ENCODE measurements at regions of chr2 and their contacts with region 1.

Region 1: GRCh38 chr2:25700221-25700660 is 26.9 kb upstream of the DTNB start:
- DNase-seq: no peak
- ATAC-seq: peak; percentile 86
- H3K4me3 ChIP-seq: no peak overlapping the region
- H3K27ac ChIP-seq: no peak overlapping the region
- H3K4me1 ChIP-seq: no peaks in the 10 kb centered on the region
- H3K27me3 ChIP-seq: peaks cover 4 to 5% of the 10 kb centered on the region in 2 experiments; a peak in 2 of 4 replicates
- CTCF ChIP-seq: peak; percentile 69 to 80 (median 70)
- EP300 ChIP-seq: no peak
- POLR2A ChIP-seq: no peak
- RAD21 ChIP-seq: peak; percentile 65

Region 2: GRCh38 chr2:25349397-25349796 is 350.8 kb before region 1 on chr2:
- CTCF ChIA-PET with region 1: no interaction called
- POLR2A ChIA-PET with region 1: no interaction called
- RAD21 ChIA-PET with region 1: no interaction called
- SMC1A ChIA-PET with region 1: no interaction called
- in situ Hi-C with region 1: no loop called
- intact Hi-C with region 1: no loop called
- DNase-seq: no peak
- ATAC-seq: no peak
- H3K4me3 ChIP-seq: no peak overlapping the region
- H3K27ac ChIP-seq: no peak overlapping the region
- H3K4me1 ChIP-seq: peaks cover 15% of the 10 kb centered on the region
- H3K27me3 ChIP-seq: peaks cover 0 to 1% of the 10 kb centered on the region in 2 experiments; a peak in 2 of 4 replicates
- CTCF ChIP-seq: no peak
- EP300 ChIP-seq: no peak
- POLR2A ChIP-seq: no peak
- RAD21 ChIP-seq: no peak

Region 3: DNA sequence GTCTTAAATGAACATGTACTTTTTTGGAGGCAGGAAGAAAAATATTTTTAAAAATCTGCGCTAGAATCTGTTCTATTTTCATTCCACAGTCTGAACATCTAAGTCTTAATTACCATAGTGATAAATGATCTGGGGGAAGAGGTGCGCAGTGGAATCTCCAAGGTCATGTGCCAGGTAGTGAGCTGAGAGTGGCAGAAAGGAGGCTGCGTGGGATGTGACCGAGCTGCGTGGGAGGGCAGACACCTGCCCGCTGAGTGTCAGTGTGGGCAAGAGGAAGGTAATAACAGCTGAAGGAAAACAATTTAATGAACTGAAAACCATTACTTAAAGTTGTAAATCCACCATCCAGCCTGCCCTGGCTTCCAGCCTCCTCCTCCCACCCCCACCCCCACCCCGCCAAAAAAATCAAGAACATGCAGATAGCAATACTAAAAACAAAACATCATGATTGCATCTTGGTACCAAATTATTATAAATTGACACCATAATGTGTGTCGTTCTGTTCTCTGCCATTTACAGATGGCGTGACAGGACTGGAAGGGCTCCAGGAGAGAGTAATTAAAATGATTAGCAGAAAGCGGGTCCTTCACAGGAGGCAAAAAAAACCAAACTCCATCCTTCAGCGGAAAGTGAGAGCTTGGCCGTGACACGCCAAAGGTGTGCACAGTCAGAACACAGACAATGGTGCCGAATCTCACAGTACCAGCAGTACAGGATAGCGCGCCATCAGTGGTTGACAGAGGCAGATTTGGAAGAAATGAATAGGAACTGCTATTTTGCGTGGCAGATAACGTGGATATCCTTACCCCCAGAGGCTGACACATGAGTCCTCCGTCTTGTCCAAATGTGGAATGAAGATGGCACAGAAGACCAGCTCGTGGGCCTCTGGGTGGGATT is 15.4 kb before region 1 on chr2:
- CTCF ChIA-PET with region 1: interaction called, 21 read pairs
- POLR2A ChIA-PET with region 1: interaction called, 3 read pairs
- RAD21 ChIA-PET with region 1: no interaction called
- SMC1A ChIA-PET with region 1: interaction called, 5 read pairs
- in situ Hi-C with region 1: no loop called
- intact Hi-C with region 1: no loop called
- DNase-seq: no peak
- ATAC-seq: no peak
- H3K4me3 ChIP-seq: no peak overlapping the region
- H3K27ac ChIP-seq: no peak overlapping the region
- H3K4me1 ChIP-seq: no peaks in the 10 kb centered on the region
- H3K27me3 ChIP-seq: no peaks in the 10 kb centered on the region
- CTCF ChIP-seq: no peak
- EP300 ChIP-seq: no peak
- POLR2A ChIP-seq: no peak
- RAD21 ChIP-seq: no peak

Region 4: DNA sequence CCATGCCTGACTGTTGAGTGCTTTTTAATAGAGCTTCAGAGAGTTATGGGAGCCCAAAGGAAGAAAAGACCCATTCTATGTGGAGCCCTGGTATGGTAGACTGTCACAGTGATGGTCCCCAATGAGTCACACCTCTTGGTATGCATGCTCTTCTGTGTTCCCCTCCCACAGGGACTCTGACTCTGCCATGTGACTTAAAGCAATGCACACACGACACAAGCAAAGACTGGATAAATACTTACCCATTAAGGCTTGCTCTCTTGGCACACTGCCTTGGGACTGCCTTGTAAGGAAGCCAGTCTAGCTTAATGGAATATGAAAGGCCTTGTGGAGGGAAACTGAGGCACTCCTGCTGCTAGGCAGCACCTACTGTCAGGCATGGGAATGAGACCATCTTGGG is 10.2 kb before region 1 on chr2:
- CTCF ChIA-PET with region 1: interaction called, 21 read pairs
- POLR2A ChIA-PET with region 1: interaction called, 3 read pairs
- RAD21 ChIA-PET with region 1: interaction called, 4 read pairs
- SMC1A ChIA-PET with region 1: interaction called, 6 read pairs
- in situ Hi-C with region 1: no loop called
- intact Hi-C with region 1: no loop called
- DNase-seq: no peak
- ATAC-seq: no peak
- H3K4me3 ChIP-seq: no peak overlapping the region
- H3K27ac ChIP-seq: no peak overlapping the region
- H3K4me1 ChIP-seq: no peaks in the 10 kb centered on the region
- H3K27me3 ChIP-seq: no peaks in the 10 kb centered on the region
- CTCF ChIP-seq: no peak
- EP300 ChIP-seq: no peak
- POLR2A ChIP-seq: no peak
- RAD21 ChIP-seq: no peak

Region 5: GRCh38 chr2:25714740-25715139 is 14.5 kb after region 1 on chr2:
- CTCF ChIA-PET with region 1: interaction called, 31 read pairs
- POLR2A ChIA-PET with region 1: no interaction called
- RAD21 ChIA-PET with region 1: interaction called, 5 read pairs
- SMC1A ChIA-PET with region 1: interaction called, 9 read pairs
- in situ Hi-C with region 1: no loop called
- intact Hi-C with region 1: no loop called
- DNase-seq: no peak
- ATAC-seq: 0 out of 3 replicates have a peak, but pooled peaks have one; percentile 27
- H3K4me3 ChIP-seq: no peak overlapping the region
- H3K27ac ChIP-seq: no peak overlapping the region
- H3K4me1 ChIP-seq: no peaks in the 10 kb centered on the region
- H3K27me3 ChIP-seq: no peaks in the 10 kb centered on the region
- CTCF ChIP-seq: peak; percentile 10 to 16 (median 11); a peak in 4 of 6 replicates
- EP300 ChIP-seq: no peak
- POLR2A ChIP-seq: no peak
- RAD21 ChIP-seq: peak; percentile 39; the same call in 1 of the 2 replicates

Region 6: DNA sequence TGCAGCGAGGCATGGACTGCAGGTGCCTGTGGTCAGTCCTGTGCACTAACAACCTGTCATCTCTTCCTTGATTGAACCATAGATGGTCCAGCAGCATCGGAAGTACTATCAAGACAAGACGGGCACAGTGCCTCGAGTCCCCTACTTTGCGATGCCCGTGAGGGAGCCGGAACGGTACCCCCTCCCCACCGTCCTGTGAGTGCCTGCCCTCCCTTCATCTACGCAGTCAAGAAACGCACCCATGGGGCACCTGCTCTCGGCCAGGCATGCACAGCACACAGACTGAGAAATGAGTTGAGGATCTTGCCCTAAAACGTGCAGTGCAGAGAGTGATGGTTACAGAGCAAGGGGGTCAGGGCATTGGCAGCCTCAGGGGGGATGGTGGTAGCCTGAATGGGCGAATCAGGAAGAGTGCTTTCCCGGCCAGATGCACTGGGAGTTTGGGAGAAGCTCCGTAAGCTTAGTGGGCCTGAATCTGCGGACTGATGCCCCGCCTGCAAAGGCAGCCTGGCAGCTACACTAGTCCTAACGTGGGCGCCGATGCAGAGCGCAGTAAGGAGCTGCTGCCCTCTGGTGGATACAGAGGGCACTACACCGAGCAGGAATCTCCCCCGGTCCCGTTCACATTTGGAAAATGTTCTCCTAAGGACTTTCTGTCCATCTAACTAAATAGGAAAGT is 877.3 kb after region 1 on chr2:
- CTCF ChIA-PET with region 1: no interaction called
- POLR2A ChIA-PET with region 1: no interaction called
- RAD21 ChIA-PET with region 1: no interaction called
- SMC1A ChIA-PET with region 1: no interaction called
- in situ Hi-C with region 1: no loop called
- intact Hi-C with region 1: no loop called
- DNase-seq: no peak
- ATAC-seq: peak; percentile 93
- H3K4me3 ChIP-seq: no peak overlapping the region
- H3K27ac ChIP-seq: no peak overlapping the region
- H3K4me1 ChIP-seq: no peaks in the 10 kb centered on the region
- H3K27me3 ChIP-seq: peaks cover 0 to 4% of the 10 kb centered on the region in 2 experiments; a peak in 2 of 4 replicates
- CTCF ChIP-seq: peak; percentile 94 to 97 (median 97)
- EP300 ChIP-seq: no peak
- POLR2A ChIP-seq: no peak
- RAD21 ChIP-seq: peak; percentile 82